ENCODE measurements at regions of chr12 and their contacts with region 1.

Region 1: GRCh38 chr12:56578983-56579546 is 51.1 kb downstream of the BAZ2A start:
- DNase-seq: no peak
- ATAC-seq: no peak
- H3K4me3 ChIP-seq: no peak overlapping the region
- H3K27ac ChIP-seq: no peak overlapping the region
- H3K4me1 ChIP-seq: no peaks in the 10 kb centered on the region
- H3K27me3 ChIP-seq: no peaks in the 10 kb centered on the region
- CTCF ChIP-seq: no peak

Region 2: GRCh38 chr12:56510786-56511185 is 68.3 kb before region 1 on chr12:
- intact Hi-C with region 1: loop called in 1 of 2 experiments (anchors 5 kb)
- DNase-seq: no peak
- ATAC-seq: no peak
- H3K4me3 ChIP-seq: no peak overlapping the region
- H3K27ac ChIP-seq: no peak overlapping the region
- H3K4me1 ChIP-seq: peaks cover 0 to 8% of the 10 kb centered on the region in 2 donors
- H3K27me3 ChIP-seq: no peaks in the 10 kb centered on the region
- CTCF ChIP-seq: no peak

Region 3: DNA sequence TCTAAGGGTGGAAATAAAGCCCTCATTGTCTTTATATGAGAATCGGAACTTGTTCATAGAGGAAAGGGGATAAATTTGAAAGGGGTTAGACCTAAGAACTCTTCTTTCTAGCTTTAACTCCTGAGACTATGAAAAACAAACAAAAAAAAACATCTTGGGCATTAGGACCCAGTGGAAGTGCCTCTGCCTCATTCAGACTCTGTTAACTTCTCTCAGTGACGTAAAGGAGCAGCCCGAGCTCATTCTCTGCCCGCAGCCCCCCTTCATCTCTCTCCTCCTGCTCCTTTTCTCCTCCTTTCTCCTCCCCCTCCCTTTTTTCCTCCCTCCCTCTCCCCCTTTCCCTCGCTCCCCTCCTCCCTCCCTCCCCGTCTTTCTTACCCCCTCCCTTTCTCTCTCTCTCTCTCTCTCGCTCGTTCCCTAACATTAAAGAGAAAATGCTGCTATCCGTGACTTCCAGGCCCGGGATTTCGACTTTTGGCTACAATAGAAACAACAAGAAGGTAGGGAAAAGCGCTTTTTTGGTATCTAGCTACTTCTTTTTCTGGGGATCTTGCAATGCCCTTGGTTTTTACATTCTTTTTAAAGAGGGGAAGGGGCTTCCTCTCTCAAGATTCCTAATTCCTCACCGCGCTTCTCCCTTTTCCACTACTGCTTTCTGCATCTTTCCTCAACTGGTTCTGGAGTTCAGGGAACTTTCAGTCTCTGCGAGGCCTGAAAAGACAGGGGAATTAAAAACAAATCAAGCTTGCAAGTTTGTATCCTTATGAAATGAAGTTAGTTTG is 57.3 kb before region 1 on chr12 and contains the start of gene RBMS2:
- intact Hi-C with region 1: no loop called
- DNase-seq: peak; percentile 68 to 95 (median 86)
- ATAC-seq: peak; percentile 91
- H3K4me3 ChIP-seq: peak within 1 kb of the TSS; percentile 42 to 60
- H3K27ac ChIP-seq: peak within 1 kb of the TSS; percentile 82 to 95
- H3K4me1 ChIP-seq: peaks cover 19 to 67% of the 10 kb centered on the region in 2 donors
- H3K27me3 ChIP-seq: no peaks in the 10 kb centered on the region
- CTCF ChIP-seq: no peak
- polyA plus RNA-seq, gene RBMS2: 49.0 to 74.9 (median 67.1) TPM